CD8-positive, alpha-beta T cell (primary cell): ENCODE measurements at regions of chr13 and their contacts with region 1.

Region 1: GRCh38 chr13:30465585-30466357 is at the start of gene HMGB1:
- DNase-seq: peak; percentile 93 to 98 (median 96)
- ATAC-seq: peak; percentile 85
- H3K4me3 ChIP-seq: peak within 1 kb of the TSS; percentile 54 to 97
- H3K4me3 Mint-ChIP-seq: peak within 1 kb of the TSS; percentile 95
- H3K27ac ChIP-seq: peak within 1 kb of the TSS; percentile 60 to 97
- H3K27ac Mint-ChIP-seq: peak within 1 kb of the TSS; percentile 99
- H3K4me1 ChIP-seq: peaks cover 26% of the 10 kb centered on the region
- H3K4me1 Mint-ChIP-seq: peaks cover 27% of the 10 kb centered on the region
- H3K27me3 ChIP-seq: no peaks in the 10 kb centered on the region
- H3K27me3 Mint-ChIP-seq: no peaks in the 10 kb centered on the region
- CTCF ChIP-seq: no peak
- total RNA-seq, gene HMGB1: 445 to 453 TPM

Region 2: DNA sequence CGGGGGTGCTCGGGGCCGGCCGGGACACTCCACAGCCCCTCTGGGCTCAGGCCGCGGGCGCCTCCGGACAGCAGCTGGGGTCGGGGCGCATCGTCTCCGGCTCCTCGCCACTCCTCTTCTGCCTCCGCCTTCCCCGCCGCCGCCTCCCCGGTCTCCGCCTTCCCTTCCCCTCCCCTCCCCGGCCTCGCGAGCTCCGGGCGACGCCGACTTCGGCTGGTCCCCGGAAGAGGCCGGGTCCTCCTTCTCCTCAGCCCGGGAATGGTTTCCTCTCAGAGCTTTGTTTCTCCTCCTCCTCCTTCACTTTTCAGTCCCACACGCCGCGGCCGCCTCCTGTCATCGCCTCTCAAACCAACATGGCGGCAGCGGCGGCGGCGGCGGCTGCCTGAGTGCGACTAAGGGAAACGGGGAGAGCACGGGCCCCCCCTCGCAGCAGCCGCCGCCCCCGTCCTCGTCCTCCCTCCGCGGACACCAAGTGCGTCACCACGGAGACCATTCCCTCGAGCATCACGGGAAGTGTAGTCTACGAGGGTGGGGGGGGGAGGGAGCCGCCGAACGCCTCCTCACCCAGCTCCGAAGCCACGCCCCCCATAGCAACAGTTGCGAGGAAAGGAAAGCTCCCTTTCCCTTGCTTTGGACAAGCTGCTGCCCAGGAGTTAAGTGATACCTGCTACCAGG is 615.4 kb before region 1 on chr13 and contains the start of gene UBL3:
- CTCF ChIA-PET with region 1: no interaction called
- POLR2A ChIA-PET with region 1: interaction called, 3 read pairs
- intact Hi-C with region 1: loop called (anchors 1 to 5 kb)
- DNase-seq: peak; percentile 89 to 97 (median 94)
- ATAC-seq: peak; percentile 89
- H3K4me3 ChIP-seq: peak within 1 kb of the TSS; percentile 84 to 86
- H3K4me3 Mint-ChIP-seq: peak within 1 kb of the TSS; percentile 93
- H3K27ac ChIP-seq: peak within 1 kb of the TSS; percentile 90 to 96
- H3K27ac Mint-ChIP-seq: peak within 1 kb of the TSS; percentile 99
- H3K4me1 ChIP-seq: peaks cover 13% of the 10 kb centered on the region
- H3K4me1 Mint-ChIP-seq: peaks cover 24% of the 10 kb centered on the region
- H3K27me3 ChIP-seq: no peaks in the 10 kb centered on the region
- H3K27me3 Mint-ChIP-seq: no peaks in the 10 kb centered on the region
- CTCF ChIP-seq: no peak
- total RNA-seq, gene UBL3: 40.0 to 43.1 TPM

Region 3: GRCh38 chr13:30257468-30258099 is 208.2 kb before region 1 on chr13:
- CTCF ChIA-PET with region 1: no interaction called
- POLR2A ChIA-PET with region 1: interaction called, 3 read pairs
- intact Hi-C with region 1: loop called in 1 of 2 experiments (anchors 5 kb)
- DNase-seq: no peak
- ATAC-seq: no peak
- H3K4me3 ChIP-seq: no peak overlapping the region
- H3K4me3 Mint-ChIP-seq: no peak overlapping the region
- H3K27ac ChIP-seq: no peak overlapping the region
- H3K27ac Mint-ChIP-seq: peak overlapping the region; percentile 20
- H3K4me1 ChIP-seq: no peaks in the 10 kb centered on the region
- H3K4me1 Mint-ChIP-seq: peaks cover 16% of the 10 kb centered on the region
- H3K27me3 ChIP-seq: no peaks in the 10 kb centered on the region
- H3K27me3 Mint-ChIP-seq: no peaks in the 10 kb centered on the region
- CTCF ChIP-seq: no peak

Region 4: DNA sequence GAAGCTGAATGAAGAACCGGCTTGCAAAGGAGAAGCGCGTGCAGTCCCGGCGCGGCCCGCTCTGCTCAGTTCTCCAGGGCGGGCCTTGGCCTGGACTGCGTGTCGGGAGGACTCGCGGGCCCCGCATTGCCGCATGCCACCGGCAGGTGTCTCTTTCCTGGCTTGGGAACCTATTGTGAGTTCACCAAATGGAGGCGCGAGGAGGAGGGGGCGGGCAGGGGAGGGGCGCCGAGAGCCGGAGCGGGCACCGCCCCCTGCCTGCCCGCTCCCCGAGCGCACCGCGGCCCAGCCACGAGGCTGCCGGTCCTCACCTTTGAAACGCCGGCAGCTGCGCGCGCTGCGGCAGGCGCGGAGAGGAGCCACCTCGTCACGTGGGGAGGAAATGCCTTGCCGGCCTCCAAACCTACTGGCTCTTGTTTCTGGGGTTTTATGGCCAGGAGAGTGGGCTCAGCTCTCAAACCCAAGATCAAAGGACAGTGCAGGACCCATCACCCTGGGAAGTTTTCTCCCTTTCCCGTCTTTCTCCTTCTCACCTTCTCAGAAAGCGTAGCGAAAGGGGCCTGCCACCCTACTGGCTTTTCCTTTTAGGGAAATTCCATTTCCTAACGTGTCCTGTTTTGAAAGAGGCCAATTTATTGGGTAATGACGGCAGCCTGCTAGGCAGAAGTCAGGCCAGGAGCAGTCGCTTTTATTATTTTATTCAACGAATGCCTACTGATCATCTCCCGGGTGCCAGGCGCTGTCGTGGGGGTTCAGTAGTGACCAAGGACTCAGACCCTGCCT is 57.3 kb before region 1 on chr13:
- CTCF ChIA-PET with region 1: interaction called, 10 read pairs
- POLR2A ChIA-PET with region 1: interaction called, 3 read pairs
- intact Hi-C with region 1: loop called (anchors 1 kb)
- DNase-seq: peak; percentile 82 to 94 (median 90)
- ATAC-seq: peak; percentile 94
- H3K4me3 ChIP-seq: peak overlapping the region; percentile 31 to 39
- H3K4me3 Mint-ChIP-seq: peak overlapping the region; percentile 72
- H3K27ac ChIP-seq: peak overlapping the region in 1 of 2 experiments; percentile 67
- H3K27ac Mint-ChIP-seq: peak overlapping the region; percentile 86
- H3K4me1 ChIP-seq: peaks cover 14% of the 10 kb centered on the region
- H3K4me1 Mint-ChIP-seq: peaks cover 27% of the 10 kb centered on the region
- H3K27me3 ChIP-seq: no peaks in the 10 kb centered on the region
- H3K27me3 Mint-ChIP-seq: no peaks in the 10 kb centered on the region
- CTCF ChIP-seq: peak; percentile 74

Region 5: DNA sequence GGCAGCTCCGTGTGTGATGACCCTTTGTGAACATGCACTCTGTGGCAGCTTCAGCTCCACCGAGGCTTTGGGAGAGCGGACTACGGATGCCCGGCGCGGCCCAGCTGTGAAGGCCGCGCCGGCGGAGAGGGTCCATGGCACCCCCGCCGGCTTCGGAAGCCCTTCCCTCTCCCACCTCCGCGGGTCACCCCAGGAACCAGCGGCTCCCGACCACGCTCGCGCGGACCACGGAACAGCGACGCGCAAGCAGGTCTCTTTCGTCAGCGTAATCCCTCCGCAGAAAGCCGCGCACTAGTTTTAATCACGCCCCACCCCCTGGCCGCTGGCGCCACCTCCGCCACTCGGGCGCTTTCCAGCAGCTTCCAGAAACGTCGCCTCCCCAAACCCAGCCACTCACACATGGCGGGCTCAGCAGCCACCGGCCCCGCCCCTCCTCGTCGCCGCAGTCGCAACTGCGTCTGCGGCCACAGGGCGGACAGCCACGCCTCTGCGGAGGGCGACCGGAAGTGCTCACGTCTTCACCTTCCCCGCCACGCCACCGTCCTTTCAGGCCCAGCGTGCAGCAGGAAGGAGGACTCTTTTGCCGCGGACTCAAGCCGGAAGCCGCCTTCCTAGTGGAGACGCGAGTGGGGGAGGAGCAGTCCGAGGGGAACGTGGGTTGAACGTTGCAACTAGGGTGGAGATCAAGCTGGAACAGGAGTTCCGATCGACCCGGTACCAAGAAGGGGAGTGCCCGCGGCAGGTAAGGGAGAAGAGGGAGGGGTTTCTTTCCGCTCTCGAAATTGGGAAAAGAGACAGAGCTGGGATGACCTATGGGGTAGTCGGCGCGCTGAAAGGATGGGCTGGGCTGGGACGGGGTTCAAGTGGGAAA is 151.8 kb after region 1 on chr13 and contains the start of gene USPL1:
- CTCF ChIA-PET with region 1: interaction called, 3 read pairs
- POLR2A ChIA-PET with region 1: interaction called, 48 read pairs
- intact Hi-C with region 1: loop called (anchors 1 kb)
- DNase-seq: peak; percentile 97 to 100 (median 99)
- ATAC-seq: peak; percentile 89
- H3K4me3 ChIP-seq: peak within 1 kb of the TSS; percentile 78 to 96
- H3K4me3 Mint-ChIP-seq: no peak within 1 kb of the TSS
- H3K27ac ChIP-seq: peak within 1 kb of the TSS; percentile 94 to 95
- H3K27ac Mint-ChIP-seq: no peak within 1 kb of the TSS
- H3K4me1 ChIP-seq: peaks cover 34% of the 10 kb centered on the region
- H3K4me1 Mint-ChIP-seq: peaks cover 39% of the 10 kb centered on the region
- H3K27me3 ChIP-seq: no peaks in the 10 kb centered on the region
- H3K27me3 Mint-ChIP-seq: no peaks in the 10 kb centered on the region
- CTCF ChIP-seq: no peak
- total RNA-seq, gene USPL1: 42.0 to 42.4 TPM

Region 6: GRCh38 chr13:31161828-31162590 is 696.2 kb after region 1 on chr13 and contains the start of gene HSPH1:
- CTCF ChIA-PET with region 1: no interaction called
- POLR2A ChIA-PET with region 1: no interaction called
- intact Hi-C with region 1: loop called in 1 of 2 experiments (anchors 2 kb)
- DNase-seq: peak; percentile 96 to 99 (median 98)
- ATAC-seq: peak; percentile 83
- H3K4me3 ChIP-seq: peak within 1 kb of the TSS; percentile 76 to 95
- H3K4me3 Mint-ChIP-seq: peak within 1 kb of the TSS; percentile 95
- H3K27ac ChIP-seq: peak within 1 kb of the TSS; percentile 98
- H3K27ac Mint-ChIP-seq: peak within 1 kb of the TSS; percentile 98
- H3K4me1 ChIP-seq: peaks cover 25% of the 10 kb centered on the region
- H3K4me1 Mint-ChIP-seq: peaks cover 43% of the 10 kb centered on the region
- H3K27me3 ChIP-seq: no peaks in the 10 kb centered on the region
- H3K27me3 Mint-ChIP-seq: no peaks in the 10 kb centered on the region
- CTCF ChIP-seq: no peak
- total RNA-seq, gene HSPH1: 189 to 199 TPM